Activated CD4-positive, alpha-beta memory T cell treated with anti-CD3 and anti-CD28 coated beads, Interleukin-2, amount 10 ng/mL, durations not matched to agents 7 days and 5 days (primary cell): ENCODE measurements at regions of chr13 and their contacts with region 1.

Region 1: GRCh38 chr13:99200432-99201167 is at the start of gene UBAC2:
- DNase-seq: peak; percentile 97
- H3K4me3 Mint-ChIP-seq: peak within 1 kb of the TSS; percentile 93
- H3K27ac Mint-ChIP-seq: peak within 1 kb of the TSS; percentile 80
- H3K4me1 Mint-ChIP-seq: peaks cover 50% of the 10 kb centered on the region
- H3K27me3 Mint-ChIP-seq: peaks cover 6% of the 10 kb centered on the region
- total RNA-seq, gene UBAC2: 53.8 to 55.2 TPM

Region 2: GRCh38 chr13:99018418-99019180 is 182.0 kb before region 1 on chr13:
- CTCF ChIA-PET with region 1: no interaction called
- POLR2A ChIA-PET with region 1: no interaction called
- DNase-seq: no peak
- H3K4me3 Mint-ChIP-seq: no peak overlapping the region
- H3K27ac Mint-ChIP-seq: no peak overlapping the region
- H3K4me1 Mint-ChIP-seq: peaks cover 30% of the 10 kb centered on the region
- H3K27me3 Mint-ChIP-seq: no peaks in the 10 kb centered on the region

Region 3: GRCh38 chr13:99045396-99045795 is 155.2 kb before region 1 on chr13:
- CTCF ChIA-PET with region 1: no interaction called
- POLR2A ChIA-PET with region 1: interaction called, 19 read pairs
- DNase-seq: no peak
- H3K4me3 Mint-ChIP-seq: peak overlapping the region; percentile 68
- H3K27ac Mint-ChIP-seq: peak overlapping the region; percentile 97
- H3K4me1 Mint-ChIP-seq: peaks cover 94% of the 10 kb centered on the region
- H3K27me3 Mint-ChIP-seq: no peaks in the 10 kb centered on the region

Region 4: DNA sequence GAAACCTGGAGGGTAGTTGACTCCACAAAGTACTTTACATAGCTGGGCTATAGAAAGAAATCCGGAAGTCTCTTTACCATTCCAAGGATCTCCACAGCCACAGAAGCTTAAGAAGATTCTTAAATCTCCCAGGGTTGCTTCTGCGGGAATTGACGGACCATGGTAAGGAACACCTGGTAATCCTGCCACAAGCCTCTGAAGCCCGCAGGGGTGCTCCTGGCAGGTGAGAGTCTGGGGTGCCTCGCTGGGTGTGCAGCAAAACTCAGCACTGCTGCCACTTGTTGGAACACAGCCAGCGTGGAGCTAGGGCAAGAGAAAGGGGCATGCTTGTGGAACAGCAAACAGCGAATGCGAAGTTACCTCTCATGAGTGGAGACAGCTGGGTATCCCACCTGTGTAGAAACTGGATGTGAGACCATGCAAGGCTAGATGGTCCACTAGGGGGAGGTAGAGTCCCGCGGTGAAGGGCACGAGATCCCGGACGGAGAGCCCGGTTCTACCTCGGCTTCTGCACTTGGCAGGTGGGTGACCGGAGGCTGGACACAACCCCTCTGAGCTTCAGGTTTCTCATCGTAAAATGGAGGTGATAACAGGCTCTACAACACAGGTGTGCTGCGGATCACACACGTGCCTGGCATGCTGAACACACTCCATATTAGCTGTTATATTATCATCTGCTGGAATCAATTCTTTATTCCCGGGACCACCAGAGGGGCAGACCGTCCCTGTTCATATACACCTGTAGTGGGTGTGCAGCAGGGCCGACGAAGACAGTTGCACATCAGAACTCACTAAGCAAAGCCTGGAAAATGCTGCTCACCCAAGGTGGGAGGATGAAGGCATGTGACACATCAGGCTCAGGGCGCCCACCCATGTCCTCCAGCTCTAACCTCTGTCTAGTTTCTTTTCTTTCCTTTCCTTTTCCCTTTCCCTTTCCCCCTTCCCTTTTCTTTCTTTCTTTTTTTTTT is 24.0 kb before region 1 on chr13:
- CTCF ChIA-PET with region 1: interaction called, 21 read pairs
- POLR2A ChIA-PET with region 1: interaction called, 11 read pairs
- DNase-seq: peak; percentile 79
- H3K4me3 Mint-ChIP-seq: no peak overlapping the region
- H3K27ac Mint-ChIP-seq: no peak overlapping the region
- H3K4me1 Mint-ChIP-seq: peaks cover 29% of the 10 kb centered on the region
- H3K27me3 Mint-ChIP-seq: peaks cover 10% of the 10 kb centered on the region

Region 5: GRCh38 chr13:99214232-99214631 is 13.6 kb after region 1 on chr13:
- CTCF ChIA-PET with region 1: interaction called, 15 read pairs
- POLR2A ChIA-PET with region 1: interaction called, 45 read pairs
- DNase-seq: no peak
- H3K4me3 Mint-ChIP-seq: peak overlapping the region; percentile 3
- H3K27ac Mint-ChIP-seq: peak overlapping the region; percentile 83
- H3K4me1 Mint-ChIP-seq: peaks cover 54% of the 10 kb centered on the region
- H3K27me3 Mint-ChIP-seq: no peaks in the 10 kb centered on the region

Region 6: DNA sequence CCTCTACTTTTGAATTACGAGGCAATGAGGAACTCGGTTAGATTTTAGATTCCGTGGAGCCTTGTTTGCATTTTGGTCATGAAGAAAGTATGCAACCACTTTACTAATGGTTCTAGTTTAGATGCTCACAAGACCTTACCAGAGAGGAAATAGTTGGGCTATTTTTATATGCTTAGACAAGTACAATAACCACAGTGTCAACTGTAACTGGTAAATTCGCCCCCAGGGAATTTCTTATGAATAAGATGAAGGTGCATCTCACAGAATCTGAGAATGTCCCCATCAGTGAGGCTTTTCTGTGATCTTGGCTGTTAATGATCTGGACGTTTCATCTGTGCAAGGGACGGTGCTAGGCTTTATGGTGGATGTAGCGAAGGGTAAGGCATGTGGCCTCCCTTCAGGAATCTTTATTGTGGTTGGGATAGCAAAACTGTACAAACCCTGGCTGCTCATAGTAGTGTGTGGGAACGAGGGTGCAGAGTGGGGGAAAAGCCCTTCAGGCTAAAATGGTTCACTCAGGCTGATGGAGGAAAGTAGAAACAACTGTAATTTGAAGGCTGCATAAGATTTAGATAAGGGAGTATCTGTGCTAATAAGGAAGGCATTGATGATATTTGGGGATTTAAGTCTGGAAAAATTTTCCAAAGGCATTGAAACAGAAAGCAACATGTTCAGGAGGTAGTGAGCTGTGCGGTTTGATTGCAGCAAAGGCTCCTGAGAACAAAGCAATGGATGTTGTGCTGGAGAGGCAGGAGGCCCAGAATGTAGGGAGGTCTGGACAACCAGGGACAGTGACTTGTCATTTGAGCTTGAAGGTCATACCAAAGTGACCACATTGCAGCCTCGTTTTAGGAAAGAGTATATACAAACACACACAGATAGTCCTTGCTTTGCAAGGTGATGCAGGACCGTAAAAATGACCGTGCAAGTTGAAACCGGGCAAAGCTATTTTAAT is 28.4 kb after region 1 on chr13:
- CTCF ChIA-PET with region 1: interaction called, 5 read pairs
- POLR2A ChIA-PET with region 1: interaction called, 42 read pairs
- DNase-seq: no peak
- H3K4me3 Mint-ChIP-seq: peak overlapping the region; percentile 48
- H3K27ac Mint-ChIP-seq: peak overlapping the region; percentile 75
- H3K4me1 Mint-ChIP-seq: peaks cover 60% of the 10 kb centered on the region
- H3K27me3 Mint-ChIP-seq: no peaks in the 10 kb centered on the region

Region 7: DNA sequence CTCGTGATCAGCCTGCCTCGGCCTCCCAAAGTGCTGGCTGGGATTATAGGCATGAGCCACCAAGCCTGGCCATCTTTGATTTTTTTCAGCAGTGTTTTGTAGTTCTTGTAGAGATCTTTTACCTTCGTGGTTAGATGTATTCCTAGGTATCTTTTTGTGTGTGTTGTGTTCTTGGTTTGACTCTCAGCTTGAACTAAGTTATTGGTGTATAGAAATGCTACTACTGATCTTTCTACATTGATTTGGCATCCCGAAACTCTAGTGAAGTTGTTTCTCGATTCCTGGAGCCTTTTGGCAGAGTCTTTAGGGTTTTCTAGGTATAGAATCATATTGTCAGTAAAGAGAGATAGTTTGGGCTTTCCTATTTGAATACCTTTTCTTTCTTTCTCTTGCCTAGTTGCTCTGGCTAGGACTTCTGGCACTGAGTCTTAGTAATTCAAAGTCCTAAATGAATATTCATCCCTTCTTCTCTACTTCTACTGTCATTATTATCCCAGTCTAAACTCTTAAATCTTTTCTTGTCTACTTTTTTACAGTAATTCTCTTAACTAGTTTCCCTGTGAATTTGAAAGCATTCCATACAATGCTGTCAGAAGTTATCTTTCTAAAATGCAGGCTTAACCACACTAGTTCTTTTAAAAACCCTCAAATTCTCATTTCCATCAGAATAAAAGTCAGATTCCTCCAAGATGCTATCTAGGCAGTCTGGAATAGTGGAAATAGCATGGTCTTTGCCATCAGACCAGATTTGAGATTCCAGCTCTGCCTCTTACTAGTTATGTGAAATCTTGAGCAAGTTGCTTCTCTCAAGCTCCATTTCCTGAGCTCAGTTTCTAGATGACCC is 50.6 kb after region 1 on chr13:
- CTCF ChIA-PET with region 1: interaction called, 31 read pairs
- POLR2A ChIA-PET with region 1: interaction called, 99 read pairs
- DNase-seq: no peak
- H3K4me3 Mint-ChIP-seq: no peak overlapping the region
- H3K27ac Mint-ChIP-seq: no peak overlapping the region
- H3K4me1 Mint-ChIP-seq: peaks cover 38% of the 10 kb centered on the region
- H3K27me3 Mint-ChIP-seq: no peaks in the 10 kb centered on the region

Region 8: GRCh38 chr13:99307648-99308339 is 107.2 kb after region 1 on chr13:
- CTCF ChIA-PET with region 1: interaction called, 3 read pairs
- POLR2A ChIA-PET with region 1: interaction called, 37 read pairs
- DNase-seq: peak; percentile 78
- H3K4me3 Mint-ChIP-seq: peak overlapping the region; percentile 79
- H3K27ac Mint-ChIP-seq: peak overlapping the region; percentile 83
- H3K4me1 Mint-ChIP-seq: peaks cover 82% of the 10 kb centered on the region
- H3K27me3 Mint-ChIP-seq: no peaks in the 10 kb centered on the region